Activated CD8-positive, alpha-beta T cell treated with anti-CD3 and anti-CD28 coated beads, Interleukin-2, amount 10 ng/mL, durations not matched to agents 7 days and 5 days (primary cell): ENCODE measurements at regions of chr3 and their contacts with region 1.

Region 1: GRCh38 chr3:42746455-42747450 is 26.3 kb downstream of the CCDC13 start:
- DNase-seq: no peak
- ATAC-seq: no peak
- H3K4me3 Mint-ChIP-seq: no peak overlapping the region
- H3K27ac Mint-ChIP-seq: no peak overlapping the region
- H3K4me1 Mint-ChIP-seq: peaks cover 26% of the 10 kb centered on the region
- H3K27me3 Mint-ChIP-seq: no peaks in the 10 kb centered on the region

Region 2: GRCh38 chr3:42652611-42653302 is 94.0 kb before region 1 on chr3:
- CTCF ChIA-PET with region 1: interaction called, 11 read pairs
- POLR2A ChIA-PET with region 1: no interaction called
- DNase-seq: peak; percentile 21
- ATAC-seq: peak; percentile 32
- H3K4me3 Mint-ChIP-seq: peak overlapping the region; percentile 27
- H3K27ac Mint-ChIP-seq: peak overlapping the region; percentile 18
- H3K4me1 Mint-ChIP-seq: peaks cover 22% of the 10 kb centered on the region
- H3K27me3 Mint-ChIP-seq: peaks cover 2% of the 10 kb centered on the region

Region 3: GRCh38 chr3:42852441-42852840 is 105.7 kb after region 1 on chr3:
- CTCF ChIA-PET with region 1: no interaction called
- POLR2A ChIA-PET with region 1: no interaction called
- DNase-seq: no peak
- ATAC-seq: no peak
- H3K4me3 Mint-ChIP-seq: no peak overlapping the region
- H3K27ac Mint-ChIP-seq: no peak overlapping the region
- H3K4me1 Mint-ChIP-seq: peaks cover 5% of the 10 kb centered on the region
- H3K27me3 Mint-ChIP-seq: peaks cover 2% of the 10 kb centered on the region